Body of pancreas (tissue), 4 donors: ENCODE measurements at regions of chr11 and their contacts with region 1.

Region 1: GRCh38 chr11:67665541-67666362 is 8.7 kb downstream of the ALDH3B2 start:
- DNase-seq: peak; percentile 48 to 62 (median 55)
- ATAC-seq: peak; percentile 74
- H3K4me3 ChIP-seq: no peak overlapping the region
- H3K27ac ChIP-seq: no peak overlapping the region
- H3K4me1 ChIP-seq: no peaks in the 10 kb centered on the region
- H3K27me3 ChIP-seq: no peaks in the 10 kb centered on the region
- CTCF ChIP-seq: peak in 6 of 7 experiments; percentile 14 to 55 (median 50)
- POLR2A ChIP-seq: no peak

Region 2: DNA sequence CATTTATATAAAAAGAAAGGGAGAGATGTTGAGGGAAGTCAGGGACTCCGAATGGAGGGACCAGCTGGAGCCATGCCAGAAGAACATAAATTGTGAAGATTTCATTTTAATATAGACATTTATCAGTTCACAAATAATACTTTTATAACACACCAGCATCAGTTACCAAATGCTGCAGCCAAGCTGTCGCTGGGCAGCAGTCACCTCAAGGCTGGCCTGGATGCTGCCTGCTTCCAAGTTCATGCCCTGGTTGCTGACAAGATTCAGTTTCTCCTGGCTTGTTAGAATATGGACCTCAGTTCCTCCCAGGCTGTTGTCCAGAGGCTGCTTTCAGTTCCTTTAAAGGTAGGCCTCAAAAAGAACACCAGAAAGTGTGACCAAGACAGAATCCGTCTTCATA is 39.5 kb after region 1 on chr11:
- intact Hi-C with region 1: loop called (anchors 10 kb)
- DNase-seq: no peak
- ATAC-seq: no peak
- H3K4me3 ChIP-seq: no peak overlapping the region
- H3K27ac ChIP-seq: no peak overlapping the region
- H3K4me1 ChIP-seq: no peaks in the 10 kb centered on the region
- H3K27me3 ChIP-seq: no peaks in the 10 kb centered on the region
- CTCF ChIP-seq: no peak
- POLR2A ChIP-seq: no peak